ENCODE measurements at regions of chr2 and their contacts with region 1.

Region 1: GRCh38 chr2:11949732-11950523 is 203.5 kb downstream of the LPIN1 start:
- DNase-seq: peak; percentile 82
- H3K4me3 ChIP-seq: peak overlapping the region; percentile 12
- H3K27ac ChIP-seq: peak overlapping the region; percentile 67
- H3K4me1 ChIP-seq: peaks cover 35% of the 10 kb centered on the region
- CTCF ChIP-seq: no peak

Region 2: DNA sequence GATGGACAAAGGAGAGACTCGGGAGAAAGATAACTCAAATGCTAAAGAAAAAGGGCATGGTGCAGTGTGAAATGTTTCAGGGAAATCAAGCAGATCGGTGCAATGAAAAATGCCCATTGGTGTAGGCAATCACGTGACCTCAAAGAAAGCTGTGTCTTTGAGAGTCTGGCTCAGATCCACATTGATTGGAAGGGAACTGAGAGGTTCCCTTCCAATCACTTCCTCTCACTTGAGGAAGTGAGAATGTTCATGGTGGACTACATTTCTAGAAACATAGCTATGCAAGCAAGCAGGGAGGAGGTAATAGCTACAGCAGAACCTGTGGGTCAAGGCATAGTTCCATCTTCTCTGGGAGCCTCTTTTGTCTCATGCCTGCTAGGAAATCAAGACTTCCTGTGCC is 16.1 kb before region 1 on chr2:
- CTCF ChIA-PET with region 1: no interaction called
- POLR2A ChIA-PET with region 1: interaction called, 3 read pairs
- intact Hi-C with region 1: loop called (anchors 2 kb)
- DNase-seq: peak; percentile 64
- H3K4me3 ChIP-seq: no peak overlapping the region
- H3K27ac ChIP-seq: no peak overlapping the region
- H3K4me1 ChIP-seq: peaks cover 19% of the 10 kb centered on the region
- CTCF ChIP-seq: no peak

Region 3: DNA sequence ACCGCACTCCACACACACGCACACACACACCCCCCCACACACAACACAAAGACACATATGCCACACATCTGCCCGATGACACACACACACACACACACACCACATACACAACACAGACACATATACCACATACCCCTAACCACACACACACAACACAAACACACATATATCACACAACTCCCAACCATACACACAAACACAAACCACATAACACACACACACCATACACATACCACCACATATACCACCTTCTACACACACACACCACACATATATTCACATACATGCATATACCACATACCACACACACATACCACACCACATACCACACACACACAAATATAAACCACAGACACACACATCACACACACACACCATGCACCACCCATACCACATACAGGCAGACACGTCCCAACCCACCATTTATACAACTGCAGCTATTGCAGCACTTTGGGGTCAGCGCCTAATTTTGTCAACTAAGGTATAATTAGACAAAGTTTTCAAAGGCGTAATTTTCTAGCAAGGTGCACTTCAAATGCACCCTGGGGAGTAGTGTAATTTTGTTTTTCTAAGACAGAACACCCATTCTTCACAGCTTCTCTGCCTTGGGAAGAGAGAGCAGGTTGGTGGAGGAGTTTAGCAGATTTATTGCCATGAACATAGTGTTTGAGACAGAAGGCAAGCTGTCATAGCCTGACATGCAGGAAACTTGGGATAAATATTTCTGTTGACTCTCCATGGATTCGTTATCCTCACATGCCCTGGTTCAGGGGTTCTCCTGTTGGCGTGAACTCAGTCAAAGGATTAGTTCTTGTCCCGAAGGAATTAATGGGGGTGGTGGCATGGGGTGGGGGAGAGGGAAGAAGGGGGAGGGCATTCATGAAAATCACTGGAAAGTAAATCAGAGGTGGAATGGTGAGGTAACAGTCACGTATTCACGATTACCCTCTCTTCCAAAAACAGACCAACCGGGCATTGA is 212.6 kb after region 1 on chr2:
- CTCF ChIA-PET with region 1: no interaction called
- POLR2A ChIA-PET with region 1: no interaction called
- intact Hi-C with region 1: no loop called
- DNase-seq: no peak
- H3K4me3 ChIP-seq: no peak overlapping the region
- H3K27ac ChIP-seq: no peak overlapping the region
- H3K4me1 ChIP-seq: no peaks in the 10 kb centered on the region
- CTCF ChIP-seq: no peak